Panc1 (cell line): ENCODE measurements at regions of chr1 and their contacts with region 1.

Region 1: DNA sequence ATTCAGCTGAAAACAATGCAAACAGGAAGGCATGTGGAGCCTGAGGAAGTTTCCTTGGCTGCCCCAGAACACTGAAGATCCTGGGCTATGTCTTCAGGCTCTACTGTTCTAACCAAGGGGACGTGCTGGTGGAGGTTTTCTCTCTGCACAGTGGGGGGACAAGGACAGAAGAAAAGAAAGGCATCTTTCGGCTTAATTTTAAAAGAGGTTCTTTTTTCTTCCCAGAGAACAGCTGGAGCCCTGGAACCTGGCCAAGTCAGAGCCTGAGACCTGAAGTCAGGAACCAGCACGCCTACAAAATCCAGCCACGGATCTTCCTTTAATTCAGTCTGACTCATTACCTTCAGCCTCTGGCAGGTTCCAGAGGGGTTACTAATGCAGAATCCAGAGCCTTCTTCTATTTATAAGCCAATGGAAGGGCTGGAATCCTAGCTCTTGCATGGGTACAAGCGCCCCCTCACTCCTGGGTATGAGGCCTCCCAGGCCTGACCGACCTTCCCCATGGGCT is 19.8 kb downstream of the CTNNBIP1 start:
- DNase-seq: no peak
- ATAC-seq: peak; percentile 66
- H3K4me3 ChIP-seq: no peak overlapping the region
- H3K27ac ChIP-seq: peak overlapping the region; percentile 65
- H3K4me1 ChIP-seq: peaks cover 45% of the 10 kb centered on the region
- H3K27me3 ChIP-seq: no peaks in the 10 kb centered on the region
- CTCF ChIP-seq: no peak

Region 2: DNA sequence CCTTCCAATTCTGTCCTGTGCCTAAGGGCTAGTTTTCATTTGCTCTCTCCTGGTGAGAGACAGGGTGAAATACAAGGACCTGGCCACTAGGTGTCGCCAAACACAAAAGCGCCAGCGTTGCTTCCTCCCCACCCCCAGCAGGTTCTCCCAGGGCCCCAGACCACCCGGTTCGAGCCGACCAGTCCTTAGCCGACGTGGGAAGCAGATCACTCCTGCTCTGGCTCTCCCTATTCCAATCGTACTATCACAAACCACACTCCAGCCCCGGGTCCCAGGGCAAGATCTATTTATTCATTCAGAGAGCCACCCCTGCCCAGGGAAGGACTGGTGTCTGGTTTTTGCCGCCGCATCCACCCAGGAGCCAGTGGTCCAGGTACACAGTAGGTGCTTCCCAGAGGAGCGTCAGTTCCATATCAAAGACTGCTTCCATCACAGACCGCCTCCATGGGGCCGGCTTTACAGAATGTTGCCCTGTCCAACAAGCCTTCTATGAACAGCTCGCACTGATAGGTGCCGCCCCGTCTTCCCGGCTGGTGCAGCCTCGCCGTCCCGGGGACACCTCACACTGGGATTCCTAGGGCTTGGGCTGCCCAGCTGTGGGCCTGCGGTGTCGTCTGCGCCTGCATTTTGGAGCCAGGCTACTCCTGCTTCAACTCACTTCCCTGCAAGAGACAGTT is 15.2 kb before region 1 on chr1:
- CTCF ChIA-PET with region 1: interaction called, 13 read pairs
- POLR2A ChIA-PET with region 1: interaction called, 3 read pairs
- in situ Hi-C with region 1: no loop called
- intact Hi-C with region 1: no loop called
- DNase-seq: no peak
- ATAC-seq: peak; percentile 94
- H3K4me3 ChIP-seq: peak overlapping the region; percentile 19 to 50; a peak in 3 of 4 replicates
- H3K27ac ChIP-seq: peak overlapping the region; percentile 57; the same call in 1 of the 2 replicates
- H3K4me1 ChIP-seq: peaks cover 6% of the 10 kb centered on the region; the same call in 1 of the 2 replicates
- H3K27me3 ChIP-seq: no peaks in the 10 kb centered on the region
- CTCF ChIP-seq: peak; percentile 97

Region 3: GRCh38 chr1:9904596-9904995 is 14.3 kb after region 1 on chr1:
- CTCF ChIA-PET with region 1: interaction called, 13 read pairs
- POLR2A ChIA-PET with region 1: interaction called, 5 read pairs
- in situ Hi-C with region 1: no loop called
- intact Hi-C with region 1: no loop called
- DNase-seq: no peak
- ATAC-seq: no peak
- H3K4me3 ChIP-seq: no peak overlapping the region
- H3K27ac ChIP-seq: no peak overlapping the region
- H3K4me1 ChIP-seq: peaks cover 35% of the 10 kb centered on the region
- H3K27me3 ChIP-seq: no peaks in the 10 kb centered on the region
- CTCF ChIP-seq: no peak

Region 4: DNA sequence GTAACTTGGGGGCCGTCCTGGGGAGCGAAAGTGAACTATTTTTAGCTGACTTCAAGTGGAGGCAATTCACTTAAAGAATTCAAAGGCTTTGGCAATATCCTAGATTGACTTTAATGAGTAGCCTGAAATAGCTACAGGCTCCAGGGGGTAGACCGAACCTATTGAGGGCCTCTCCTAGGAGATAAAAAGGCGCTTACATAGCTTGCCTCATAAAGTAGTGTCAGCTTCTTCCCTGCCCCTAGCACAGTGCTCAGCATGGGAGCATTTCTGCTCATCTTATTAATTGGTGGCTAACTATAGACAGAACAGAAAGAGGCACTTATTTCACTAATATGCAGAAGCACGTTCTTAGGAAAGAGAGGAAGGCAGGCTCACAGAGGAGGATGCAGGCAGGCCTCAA is 32.1 kb after region 1 on chr1:
- CTCF ChIA-PET with region 1: interaction called, 13 read pairs
- POLR2A ChIA-PET with region 1: interaction called, 16 read pairs
- in situ Hi-C with region 1: no loop called
- intact Hi-C with region 1: no loop called
- DNase-seq: no peak
- ATAC-seq: no peak
- H3K4me3 ChIP-seq: no peak overlapping the region
- H3K27ac ChIP-seq: no peak overlapping the region
- H3K4me1 ChIP-seq: no peaks in the 10 kb centered on the region
- H3K27me3 ChIP-seq: no peaks in the 10 kb centered on the region
- CTCF ChIP-seq: no peak